Panc1 (cell line): ENCODE measurements at regions of chr2 and their contacts with region 1.

Region 1: DNA sequence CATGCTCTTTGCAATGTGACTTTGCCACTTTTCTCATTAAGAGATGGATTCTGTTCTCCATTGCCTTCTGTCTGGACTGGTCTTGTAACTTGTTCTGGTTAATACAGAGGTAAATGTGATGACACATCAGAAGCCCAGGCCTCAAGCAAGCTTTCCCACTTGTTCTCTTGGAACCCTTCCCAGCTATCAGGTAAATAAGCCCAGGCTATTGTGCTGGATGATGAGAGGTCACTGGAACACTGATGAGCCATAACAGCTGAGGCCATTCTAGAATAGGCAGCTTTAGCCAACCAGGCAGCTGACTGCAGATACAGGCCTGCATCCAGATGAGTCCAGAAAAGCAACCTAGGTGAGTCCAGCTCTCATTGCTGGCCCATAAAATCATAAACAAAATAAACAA is 1007.0 kb upstream of the ACVR2A start:
- DNase-seq: no peak
- ATAC-seq: no peak
- H3K4me3 ChIP-seq: no peak overlapping the region
- H3K27ac ChIP-seq: no peak overlapping the region
- H3K4me1 ChIP-seq: no peaks in the 10 kb centered on the region
- H3K27me3 ChIP-seq: no peaks in the 10 kb centered on the region
- CTCF ChIP-seq: no peak

Region 2: DNA sequence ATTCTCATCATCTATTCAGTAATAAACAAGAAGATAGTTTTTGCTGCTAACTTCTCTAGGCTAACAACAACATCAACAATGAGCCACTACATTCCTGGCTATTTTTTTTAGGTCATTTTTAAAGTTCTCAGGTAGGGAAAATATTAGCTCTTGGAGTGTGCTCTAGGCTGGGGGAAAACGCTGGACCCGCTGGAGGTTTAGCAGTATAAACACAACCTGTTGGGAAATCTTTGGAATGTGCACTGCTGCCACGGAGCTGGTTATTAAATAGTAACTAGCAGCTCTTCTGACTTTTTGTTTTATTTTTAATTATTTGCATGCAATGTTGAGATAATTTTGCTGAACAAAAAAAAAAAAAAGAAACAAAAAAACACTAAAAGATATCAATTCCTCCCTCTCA is 114.8 kb after region 1 on chr2:
- CTCF ChIA-PET with region 1: interaction called, 12 read pairs
- POLR2A ChIA-PET with region 1: no interaction called
- in situ Hi-C with region 1: no loop called
- intact Hi-C with region 1: no loop called
- DNase-seq: no peak
- ATAC-seq: no peak
- H3K4me3 ChIP-seq: no peak overlapping the region
- H3K27ac ChIP-seq: no peak overlapping the region
- H3K4me1 ChIP-seq: no peaks in the 10 kb centered on the region
- H3K27me3 ChIP-seq: no peaks in the 10 kb centered on the region
- CTCF ChIP-seq: no peak

Region 3: GRCh38 chr2:147843864-147844696 is 1006.2 kb after region 1 on chr2:
- CTCF ChIA-PET with region 1: no interaction called
- POLR2A ChIA-PET with region 1: no interaction called
- in situ Hi-C with region 1: no loop called
- intact Hi-C with region 1: no loop called
- DNase-seq: no peak
- ATAC-seq: peak; percentile 96
- H3K4me3 ChIP-seq: peak overlapping the region; percentile 83 to 90
- H3K27ac ChIP-seq: peak overlapping the region; percentile 88
- H3K4me1 ChIP-seq: peaks cover 16% of the 10 kb centered on the region
- H3K27me3 ChIP-seq: peaks cover 12% of the 10 kb centered on the region
- CTCF ChIP-seq: no peak